ENCODE measurements at regions of chr3 and their contacts with region 1.

Region 1: GRCh38 chr3:194046995-194047645 is 88.8 kb upstream of the HES1 start:
- H3K4me3 Mint-ChIP-seq: peak overlapping the region; percentile 31
- H3K27ac Mint-ChIP-seq: peak overlapping the region; percentile 95
- H3K4me1 Mint-ChIP-seq: peaks cover 44% of the 10 kb centered on the region
- H3K27me3 Mint-ChIP-seq: peaks cover 43% of the 10 kb centered on the region

Region 2: GRCh38 chr3:194003125-194004057 is 43.7 kb before region 1 on chr3:
- intact Hi-C with region 1: loop called (anchors 5 kb)
- H3K4me3 Mint-ChIP-seq: peak overlapping the region; percentile 69
- H3K27ac Mint-ChIP-seq: peak overlapping the region; percentile 79
- H3K4me1 Mint-ChIP-seq: peaks cover 70% of the 10 kb centered on the region
- H3K27me3 Mint-ChIP-seq: peaks cover 38% of the 10 kb centered on the region

Region 3: GRCh38 chr3:194030369-194030768 is 16.8 kb before region 1 on chr3:
- intact Hi-C with region 1: no loop called
- H3K4me3 Mint-ChIP-seq: no peak overlapping the region
- H3K27ac Mint-ChIP-seq: no peak overlapping the region
- H3K4me1 Mint-ChIP-seq: peaks cover 14% of the 10 kb centered on the region
- H3K27me3 Mint-ChIP-seq: peaks cover 70% of the 10 kb centered on the region

Region 4: DNA sequence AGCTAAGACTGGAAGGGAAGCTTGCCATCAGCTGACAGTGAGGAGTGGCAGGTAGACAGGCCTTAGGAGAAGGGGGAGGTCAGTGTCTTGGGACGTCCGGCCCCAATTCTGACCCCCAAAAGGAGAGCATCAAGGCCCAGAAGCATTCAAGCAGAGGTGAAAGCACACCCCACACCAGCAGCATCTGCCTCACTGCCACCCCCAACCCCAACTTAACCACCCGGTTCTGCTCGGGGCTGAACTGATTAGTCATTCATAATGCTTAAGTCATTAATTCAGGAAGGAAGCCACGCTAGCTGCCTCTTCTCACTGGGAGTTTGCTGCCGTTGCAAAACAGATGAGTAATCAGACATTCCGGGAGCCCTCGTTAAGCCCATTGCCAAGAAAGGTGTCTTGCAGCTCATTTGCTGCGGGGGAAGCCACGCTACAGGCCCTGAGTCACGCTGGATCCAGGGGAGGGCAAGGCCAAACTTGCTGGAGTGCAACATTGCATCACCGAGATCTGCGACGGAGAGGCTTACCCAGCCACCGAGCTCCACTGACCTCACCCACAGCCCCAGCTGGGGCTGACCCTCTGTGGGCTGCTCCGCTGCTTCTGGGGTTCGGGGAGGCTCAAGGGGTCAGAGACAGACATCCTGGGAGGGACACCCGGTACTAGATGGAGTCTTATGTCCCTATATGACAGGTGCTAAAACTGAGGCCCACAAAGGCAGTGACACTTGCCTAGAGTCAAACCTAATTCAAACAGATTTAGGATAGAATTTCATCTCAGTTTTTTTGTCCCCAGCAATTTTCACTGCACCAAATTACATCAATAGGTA is 42.4 kb after region 1 on chr3:
- intact Hi-C with region 1: loop called (anchors 5 kb)
- H3K4me3 Mint-ChIP-seq: peak overlapping the region; percentile 58
- H3K27ac Mint-ChIP-seq: peak overlapping the region; percentile 84
- H3K4me1 Mint-ChIP-seq: peaks cover 71% of the 10 kb centered on the region
- H3K27me3 Mint-ChIP-seq: peaks cover 40% of the 10 kb centered on the region